Activated CD4-positive, alpha-beta T cell treated with anti-CD3 and anti-CD28 coated beads for 36 hours (primary cell): ENCODE measurements at regions of chr19 and their contacts with region 1.

Region 1: GRCh38 chr19:21141787-21142464 is at the start of gene ZNF431:
- DNase-seq: peak; percentile 94
- ATAC-seq: peak; percentile 99
- H3K4me3 Mint-ChIP-seq: peak within 1 kb of the TSS; percentile 95
- H3K27ac Mint-ChIP-seq: peak within 1 kb of the TSS; percentile 96
- H3K4me1 Mint-ChIP-seq: peaks cover 38% of the 10 kb centered on the region
- H3K27me3 Mint-ChIP-seq: no peaks in the 10 kb centered on the region
- total RNA-seq, gene ZNF431: 16.8 to 22.2 TPM

Region 2: DNA sequence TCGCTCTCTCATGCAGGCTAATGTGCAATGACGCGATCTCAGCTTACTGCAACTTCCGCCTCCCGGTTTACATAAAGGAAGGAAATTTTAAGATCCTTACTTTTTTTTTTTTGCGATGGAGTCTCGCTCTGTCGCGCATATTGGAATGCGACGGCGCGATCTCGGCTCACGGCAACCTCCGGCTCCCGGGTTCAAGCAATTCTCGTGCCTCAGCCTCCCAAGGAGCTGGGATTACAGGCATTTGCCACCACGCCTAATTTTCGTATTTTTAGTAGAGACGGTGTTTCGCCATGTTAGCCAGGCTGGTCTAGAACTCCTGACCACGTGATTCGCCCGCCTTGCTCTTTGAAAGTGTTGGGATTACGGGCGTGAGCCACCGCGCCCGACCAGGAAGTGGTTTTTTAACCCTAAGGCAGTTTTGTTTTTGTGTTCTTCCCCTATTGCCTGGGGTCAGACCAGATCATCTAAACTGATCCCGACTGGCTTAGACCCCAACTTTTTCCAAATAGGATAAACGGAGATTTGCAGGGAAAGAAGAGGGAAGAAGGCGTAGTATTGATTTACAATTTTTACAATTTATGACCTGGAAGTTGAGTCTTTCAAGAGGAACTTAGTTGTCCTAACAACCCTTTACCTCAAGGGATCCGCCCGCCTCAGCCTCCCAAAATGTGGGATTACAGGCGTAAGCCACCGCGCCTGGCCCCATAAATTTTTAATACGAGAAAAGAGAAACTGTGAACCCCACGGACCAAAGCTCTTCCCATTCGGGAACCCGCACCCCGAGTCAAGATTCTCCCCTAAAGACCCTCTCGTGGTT is 718.3 kb before region 1 on chr19:
- CTCF ChIA-PET with region 1: interaction called, 3 read pairs
- POLR2A ChIA-PET with region 1: interaction called, 3 read pairs
- intact Hi-C with region 1: loop called in 1 of 2 experiments (anchors 5 kb)
- DNase-seq: peak; percentile 61
- ATAC-seq: no peak
- H3K4me3 Mint-ChIP-seq: peak overlapping the region; percentile 96
- H3K27ac Mint-ChIP-seq: peak overlapping the region; percentile 99
- H3K4me1 Mint-ChIP-seq: peaks cover 9% of the 10 kb centered on the region
- H3K27me3 Mint-ChIP-seq: no peaks in the 10 kb centered on the region

Region 3: GRCh38 chr19:20565321-20566018 is 576.5 kb before region 1 on chr19 and contains the start of gene ZNF737:
- CTCF ChIA-PET with region 1: no interaction called
- POLR2A ChIA-PET with region 1: interaction called, 8 read pairs
- intact Hi-C with region 1: loop called in 1 of 2 experiments (anchors 1 kb)
- DNase-seq: peak; percentile 97
- ATAC-seq: peak; percentile 97
- H3K4me3 Mint-ChIP-seq: peak within 1 kb of the TSS; percentile 98
- H3K27ac Mint-ChIP-seq: peak within 1 kb of the TSS; percentile 98
- H3K4me1 Mint-ChIP-seq: peaks cover 19% of the 10 kb centered on the region
- H3K27me3 Mint-ChIP-seq: no peaks in the 10 kb centered on the region
- total RNA-seq, gene ZNF737: 13.9 to 16.4 TPM

Region 4: DNA sequence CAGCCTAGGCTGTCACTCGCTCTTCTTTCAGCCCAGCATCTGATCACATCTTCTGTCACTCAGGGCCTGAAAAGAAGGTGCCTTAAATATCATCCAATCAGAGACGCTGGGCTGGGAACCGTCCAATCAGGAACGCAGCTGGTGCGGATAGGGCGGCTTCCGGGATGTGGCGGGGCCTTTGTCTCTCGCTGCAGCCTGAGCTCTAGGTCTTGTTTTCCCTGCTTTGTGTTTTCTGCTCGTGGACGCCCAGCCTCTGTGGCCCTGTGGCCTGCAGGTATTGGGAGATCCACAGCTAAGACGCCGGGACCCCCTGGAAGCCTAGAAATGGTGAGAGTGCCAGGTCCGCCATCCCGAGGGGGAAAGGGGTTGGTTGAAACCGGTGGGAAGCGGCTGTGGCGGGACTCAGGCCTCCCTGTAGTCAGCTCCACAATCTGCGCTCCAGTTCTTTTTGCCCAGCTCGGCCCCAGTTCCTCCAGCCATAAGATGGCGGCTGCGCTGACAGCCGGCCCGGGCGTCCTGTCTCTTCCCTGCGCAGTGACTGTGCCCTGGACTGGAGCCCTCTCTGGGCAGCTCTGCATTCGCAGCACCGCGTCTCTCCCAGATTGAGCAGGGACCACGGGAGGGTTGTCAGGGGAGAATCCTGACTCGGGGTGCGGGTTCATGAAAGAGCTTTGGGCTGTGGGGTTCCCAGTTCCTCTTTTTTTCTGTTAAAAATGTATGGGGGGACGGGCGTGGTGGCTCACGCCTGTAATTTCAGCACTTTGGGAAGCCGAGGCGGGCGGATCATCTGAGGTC is 218.7 kb before region 1 on chr19 and contains the start of gene ZNF85:
- CTCF ChIA-PET with region 1: no interaction called
- POLR2A ChIA-PET with region 1: interaction called, 7 read pairs
- intact Hi-C with region 1: loop called in 1 of 2 experiments (anchors 1 kb)
- DNase-seq: peak; percentile 95
- ATAC-seq: peak; percentile 99
- H3K4me3 Mint-ChIP-seq: peak within 1 kb of the TSS; percentile 91
- H3K27ac Mint-ChIP-seq: peak within 1 kb of the TSS; percentile 96
- H3K4me1 Mint-ChIP-seq: peaks cover 25% of the 10 kb centered on the region
- H3K27me3 Mint-ChIP-seq: no peaks in the 10 kb centered on the region
- total RNA-seq, gene ZNF85: 23.2 to 29.3 TPM

Region 5: GRCh38 chr19:20999731-21000352 is 142.1 kb before region 1 on chr19:
- CTCF ChIA-PET with region 1: no interaction called
- POLR2A ChIA-PET with region 1: interaction called, 4 read pairs
- intact Hi-C with region 1: loop called in 1 of 2 experiments (anchors 1 kb)
- DNase-seq: peak; percentile 95
- ATAC-seq: peak; percentile 100
- H3K4me3 Mint-ChIP-seq: peak overlapping the region; percentile 89
- H3K27ac Mint-ChIP-seq: peak overlapping the region; percentile 91
- H3K4me1 Mint-ChIP-seq: peaks cover 9% of the 10 kb centered on the region
- H3K27me3 Mint-ChIP-seq: no peaks in the 10 kb centered on the region

Region 6: GRCh38 chr19:21082011-21082975 is 59.6 kb before region 1 on chr19 and contains the start of gene ZNF714:
- CTCF ChIA-PET with region 1: interaction called, 3 read pairs
- POLR2A ChIA-PET with region 1: interaction called, 4 read pairs
- intact Hi-C with region 1: loop called in 1 of 2 experiments (anchors 1 kb)
- DNase-seq: peak; percentile 89
- ATAC-seq: peak; percentile 98
- H3K4me3 Mint-ChIP-seq: peak within 1 kb of the TSS; percentile 99
- H3K27ac Mint-ChIP-seq: peak within 1 kb of the TSS; percentile 97
- H3K4me1 Mint-ChIP-seq: peaks cover 24% of the 10 kb centered on the region
- H3K27me3 Mint-ChIP-seq: no peaks in the 10 kb centered on the region
- total RNA-seq, gene ZNF714: 17.4 to 20.0 TPM

Region 7: GRCh38 chr19:21197590-21198295 is 55.8 kb after region 1 on chr19:
- CTCF ChIA-PET with region 1: no interaction called
- POLR2A ChIA-PET with region 1: no interaction called
- intact Hi-C with region 1: no loop called
- DNase-seq: no peak
- ATAC-seq: no peak
- H3K4me3 Mint-ChIP-seq: no peak overlapping the region
- H3K27ac Mint-ChIP-seq: no peak overlapping the region
- H3K4me1 Mint-ChIP-seq: no peaks in the 10 kb centered on the region
- H3K27me3 Mint-ChIP-seq: no peaks in the 10 kb centered on the region